Activated CD4-positive, alpha-beta T cell treated with anti-CD3 and anti-CD28 coated beads for 36 hours (primary cell): ENCODE measurements at regions of chr16 and their contacts with region 1.

Region 1: DNA sequence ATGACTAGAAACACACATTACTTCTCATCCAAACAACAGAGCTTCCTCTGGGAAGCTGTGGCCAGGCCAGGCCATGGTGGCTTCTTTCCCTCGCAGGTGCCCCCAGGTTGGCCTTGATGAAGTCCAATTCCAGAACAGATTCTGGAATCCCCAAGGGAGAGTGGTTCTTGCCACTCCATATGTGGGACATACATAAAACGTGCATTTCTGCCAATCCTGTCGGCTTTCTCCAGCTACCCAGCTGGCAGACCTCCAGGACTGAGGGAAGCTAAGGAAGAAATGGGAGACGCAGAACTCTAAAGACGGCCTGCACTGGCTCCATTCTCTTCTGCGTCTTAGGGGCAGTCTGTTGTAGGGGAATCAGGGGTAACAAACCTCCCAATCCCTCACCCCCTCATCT is 219.2 kb upstream of the CDH5 start:
- DNase-seq: no peak
- ATAC-seq: no peak
- H3K4me3 Mint-ChIP-seq: no peak overlapping the region
- H3K27ac Mint-ChIP-seq: no peak overlapping the region
- H3K4me1 Mint-ChIP-seq: peaks cover 3% of the 10 kb centered on the region
- H3K27me3 Mint-ChIP-seq: peaks cover 8% of the 10 kb centered on the region

Region 2: GRCh38 chr16:66081775-66082366 is 65.4 kb before region 1 on chr16:
- CTCF ChIA-PET with region 1: no interaction called
- POLR2A ChIA-PET with region 1: no interaction called
- intact Hi-C with region 1: loop called in 1 of 2 experiments (anchors 10 kb)
- DNase-seq: no peak
- ATAC-seq: no peak
- H3K4me3 Mint-ChIP-seq: no peak overlapping the region
- H3K27ac Mint-ChIP-seq: no peak overlapping the region
- H3K4me1 Mint-ChIP-seq: no peaks in the 10 kb centered on the region
- H3K27me3 Mint-ChIP-seq: peaks cover 15% of the 10 kb centered on the region

Region 3: DNA sequence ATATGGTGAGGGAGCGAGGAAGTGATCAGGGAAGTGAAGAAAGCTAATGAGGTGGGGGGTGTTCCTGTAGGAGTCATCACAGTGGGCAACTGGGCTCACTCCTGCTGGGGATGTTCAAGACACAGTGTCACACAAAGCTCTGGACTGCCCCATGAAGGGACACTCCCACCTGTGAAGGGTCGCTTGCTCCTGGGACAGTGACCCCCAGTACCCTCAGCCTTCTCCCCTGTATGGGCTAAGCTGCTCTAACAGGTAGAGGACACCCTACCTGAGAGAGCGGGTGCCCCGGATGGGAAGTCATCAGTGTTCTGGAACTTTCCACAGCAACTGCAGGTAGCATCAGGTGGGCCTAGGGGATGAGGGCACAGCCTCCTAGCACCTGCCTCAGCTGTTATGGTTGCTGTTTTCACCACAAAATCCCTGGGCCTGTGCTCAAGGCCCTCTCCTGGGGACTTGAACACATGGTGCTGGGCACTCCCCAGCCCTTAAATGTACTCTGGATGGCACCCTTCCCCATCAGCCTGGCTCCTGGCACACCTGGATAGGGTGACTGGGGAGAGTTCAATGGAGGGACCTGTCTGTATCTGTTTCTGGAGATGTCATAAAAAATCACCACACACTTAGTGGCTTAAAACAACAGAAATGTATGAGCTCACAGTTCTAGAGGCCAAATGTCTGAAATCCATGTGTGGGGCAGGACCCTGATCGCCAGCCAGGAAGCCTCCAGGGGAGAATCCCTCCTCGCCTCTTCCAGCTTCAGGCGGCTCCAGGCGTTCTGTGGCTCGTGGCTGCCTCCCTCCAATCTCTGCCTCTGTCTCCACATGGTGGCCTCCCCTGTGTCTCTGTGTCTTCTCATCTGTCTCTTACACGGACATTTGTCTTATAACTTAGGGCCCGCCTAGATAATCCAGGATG is 115.2 kb after region 1 on chr16:
- CTCF ChIA-PET with region 1: no interaction called
- POLR2A ChIA-PET with region 1: no interaction called
- intact Hi-C with region 1: no loop called
- DNase-seq: no peak
- ATAC-seq: no peak
- H3K4me3 Mint-ChIP-seq: no peak overlapping the region
- H3K27ac Mint-ChIP-seq: no peak overlapping the region
- H3K4me1 Mint-ChIP-seq: peaks cover 1% of the 10 kb centered on the region
- H3K27me3 Mint-ChIP-seq: peaks cover 13% of the 10 kb centered on the region